Psoas muscle (tissue), 8 donors: ENCODE measurements at regions of chr1 and their contacts with region 1.

Region 1: GRCh38 chr1:230772457-230773395 is 25.5 kb downstream of the CAPN9 start:
- DNase-seq: peak in 1 of 2 donors; percentile 66
- ATAC-seq: peak; percentile 86 to 97 (median 91)
- H3K4me3 ChIP-seq: peak overlapping the region; percentile 28
- H3K27ac ChIP-seq: no peak overlapping the region
- H3K4me1 ChIP-seq: no peaks in the 10 kb centered on the region
- H3K27me3 ChIP-seq: peaks cover 0 to 3% (median 0%) of the 10 kb centered on the region in 3 donors
- CTCF ChIP-seq: peak; percentile 67

Region 2: GRCh38 chr1:230642263-230642959 is 130.3 kb before region 1 on chr1 and contains the start of gene COG2:
- intact Hi-C with region 1: loop called (anchors 1 to 5 kb)
- DNase-seq: peak; percentile 95 to 97
- ATAC-seq: peak; percentile 98 to 100 (median 99)
- H3K4me3 ChIP-seq: peak within 1 kb of the TSS; percentile 90
- H3K27ac ChIP-seq: peak within 1 kb of the TSS; percentile 92
- H3K4me1 ChIP-seq: peaks cover 27% of the 10 kb centered on the region
- H3K27me3 ChIP-seq: peaks cover 0 to 3% (median 0%) of the 10 kb centered on the region in 3 donors
- CTCF ChIP-seq: peak; percentile 100
- total RNA-seq, gene COG2: 17.5 to 30.5 (median 25.0) TPM

Region 3: DNA sequence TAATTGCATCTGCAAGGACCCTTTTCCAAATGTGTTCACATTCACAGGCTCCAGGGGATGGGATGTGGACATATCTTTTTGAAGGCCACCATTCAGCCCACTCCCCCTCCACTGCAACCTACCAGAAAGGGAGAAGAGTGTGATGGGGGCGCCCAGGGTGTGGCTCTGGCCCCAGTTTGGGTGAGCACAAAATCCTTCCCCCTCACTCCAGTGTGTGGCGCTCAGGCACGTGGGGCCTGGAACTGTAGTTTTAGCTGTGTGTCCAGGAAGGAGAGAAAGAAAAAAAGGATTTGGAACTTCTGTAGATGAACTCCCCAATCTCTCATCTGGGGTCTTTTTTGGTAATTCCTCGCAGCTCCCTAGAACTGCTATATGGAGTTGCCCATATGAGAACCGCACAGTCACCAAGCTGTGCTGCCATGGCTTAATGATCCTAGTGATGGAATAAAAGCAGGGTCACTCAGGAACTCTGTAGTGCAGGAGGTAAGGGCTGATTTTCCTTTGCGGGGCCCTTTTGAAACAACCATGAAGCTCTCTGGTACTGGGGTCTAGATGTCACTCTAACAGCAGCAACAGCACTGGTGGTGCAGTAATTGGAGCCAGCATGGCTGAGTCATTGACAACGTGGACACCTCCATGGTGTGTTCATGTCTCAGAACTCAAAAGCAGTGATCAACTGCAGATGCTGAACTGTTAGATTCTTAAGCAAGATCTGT is 75.8 kb before region 1 on chr1:
- intact Hi-C with region 1: loop called (anchors 5 kb)
- DNase-seq: no peak
- ATAC-seq: peak; percentile 67 to 91 (median 85)
- H3K4me3 ChIP-seq: no peak overlapping the region
- H3K27ac ChIP-seq: no peak overlapping the region
- H3K4me1 ChIP-seq: peaks cover 13% of the 10 kb centered on the region
- H3K27me3 ChIP-seq: no peaks in the 10 kb centered on the region
- CTCF ChIP-seq: no peak

Region 4: DNA sequence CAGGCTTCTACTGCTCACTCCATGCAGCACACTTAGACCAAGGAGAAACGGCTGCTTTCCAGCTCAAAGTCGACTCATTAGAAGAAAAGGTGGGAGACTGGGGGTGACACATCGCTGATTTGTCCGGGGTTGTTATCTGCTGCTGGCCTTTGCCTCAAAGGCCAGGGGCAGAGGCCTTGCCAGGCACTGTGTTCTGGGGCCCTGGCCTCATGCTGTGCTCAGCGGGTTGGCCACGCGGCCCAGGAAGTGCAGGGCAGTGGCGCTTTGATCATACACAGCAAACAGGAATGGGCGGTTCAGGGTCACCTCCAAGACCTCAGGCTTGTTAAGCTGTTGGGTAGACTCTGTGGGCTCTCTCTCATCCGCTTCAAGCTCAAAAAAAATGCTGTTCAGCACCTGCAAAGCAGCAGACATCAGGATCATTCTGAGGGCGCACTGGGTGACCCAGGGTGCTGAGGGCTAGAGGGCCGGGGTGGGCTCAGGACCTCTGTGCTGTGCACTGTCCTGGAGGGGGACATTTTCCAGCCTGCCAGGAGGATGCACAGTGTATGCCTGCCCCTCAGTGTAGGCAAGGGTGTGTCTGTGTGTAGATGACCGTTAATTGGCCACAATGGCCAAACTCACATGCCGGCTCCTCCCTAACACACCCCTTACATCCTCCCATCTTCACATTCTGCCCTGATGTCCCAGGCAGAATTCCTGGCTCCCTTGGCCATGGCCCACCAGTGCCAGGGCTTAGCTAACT is 69.6 kb before region 1 on chr1:
- intact Hi-C with region 1: loop called (anchors 5 kb)
- DNase-seq: no peak
- ATAC-seq: no peak
- H3K4me3 ChIP-seq: no peak overlapping the region
- H3K27ac ChIP-seq: no peak overlapping the region
- H3K4me1 ChIP-seq: no peaks in the 10 kb centered on the region
- H3K27me3 ChIP-seq: no peaks in the 10 kb centered on the region
- CTCF ChIP-seq: no peak

Region 5: GRCh38 chr1:230713915-230714764 is 58.6 kb before region 1 on chr1 and contains the start of gene AGT:
- intact Hi-C with region 1: loop called in 1 of 2 experiments (anchors 5 kb)
- DNase-seq: peak; percentile 83 to 93
- ATAC-seq: peak; percentile 97 to 98 (median 97)
- H3K4me3 ChIP-seq: peak within 1 kb of the TSS; percentile 64
- H3K27ac ChIP-seq: peak within 1 kb of the TSS; percentile 79
- H3K4me1 ChIP-seq: peaks cover 22% of the 10 kb centered on the region
- H3K27me3 ChIP-seq: no peaks in the 10 kb centered on the region
- CTCF ChIP-seq: no peak
- total RNA-seq, gene AGT: 36.1 to 61.7 (median 48.8) TPM